Activated CD4-positive, alpha-beta memory T cell treated with anti-CD3 and anti-CD28 coated beads for 36 hours (primary cell): ENCODE measurements at regions of chr3 and their contacts with region 1.

Region 1: GRCh38 chr3:114152519-114153151 is 26.2 kb downstream of the DRD3 start:
- DNase-seq: peak; percentile 90
- H3K4me3 Mint-ChIP-seq: peak overlapping the region; percentile 25
- H3K27ac Mint-ChIP-seq: peak overlapping the region; percentile 18
- H3K4me1 Mint-ChIP-seq: peaks cover 8% of the 10 kb centered on the region
- H3K27me3 Mint-ChIP-seq: no peaks in the 10 kb centered on the region

Region 2: GRCh38 chr3:114168150-114168549 is 15.5 kb after region 1 on chr3:
- CTCF ChIA-PET with region 1: interaction called, 15 read pairs
- POLR2A ChIA-PET with region 1: no interaction called
- intact Hi-C with region 1: no loop called
- DNase-seq: no peak
- H3K4me3 Mint-ChIP-seq: no peak overlapping the region
- H3K27ac Mint-ChIP-seq: no peak overlapping the region
- H3K4me1 Mint-ChIP-seq: no peaks in the 10 kb centered on the region
- H3K27me3 Mint-ChIP-seq: no peaks in the 10 kb centered on the region

Region 3: DNA sequence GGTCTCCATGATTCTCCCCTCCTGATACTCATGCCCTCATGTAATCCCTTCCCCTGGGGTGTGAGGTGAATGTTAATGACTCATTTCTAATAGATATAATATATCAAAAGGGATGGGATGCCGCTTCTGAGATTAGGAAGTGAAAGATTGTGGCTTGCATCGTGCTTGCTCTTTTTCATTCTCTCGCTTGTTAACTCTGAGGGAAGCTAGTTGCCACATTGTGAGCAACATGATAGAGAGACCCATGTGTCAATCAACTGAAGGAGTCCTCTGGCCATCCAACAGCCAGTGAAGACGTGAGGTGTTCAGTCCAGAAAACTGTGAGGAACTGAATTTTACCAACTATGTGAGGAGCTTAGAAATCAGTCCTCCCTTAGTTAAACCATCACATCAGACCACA is 55.1 kb after region 1 on chr3:
- CTCF ChIA-PET with region 1: no interaction called
- POLR2A ChIA-PET with region 1: no interaction called
- intact Hi-C with region 1: no loop called
- DNase-seq: no peak
- H3K4me3 Mint-ChIP-seq: no peak overlapping the region
- H3K27ac Mint-ChIP-seq: no peak overlapping the region
- H3K4me1 Mint-ChIP-seq: peaks cover 17% of the 10 kb centered on the region
- H3K27me3 Mint-ChIP-seq: no peaks in the 10 kb centered on the region

Region 4: DNA sequence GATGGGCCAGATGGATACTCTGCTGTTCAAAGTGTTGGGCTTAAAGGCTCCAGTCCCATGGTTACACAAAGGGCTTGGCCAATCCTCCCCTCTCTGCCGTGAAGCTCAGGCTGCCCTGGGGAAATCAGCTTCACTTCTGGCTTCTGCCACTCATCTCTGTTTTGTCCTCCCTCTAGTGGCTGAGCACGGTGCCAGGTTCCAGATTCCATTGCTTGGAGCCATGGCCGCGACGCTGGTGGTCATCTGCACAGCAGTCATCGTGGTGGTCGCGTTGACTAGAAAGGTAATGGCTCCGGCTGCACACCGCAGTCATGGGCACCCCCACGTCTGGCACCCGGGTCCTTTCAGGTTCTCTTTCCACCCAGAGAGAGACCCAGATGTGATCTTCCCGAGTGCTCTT is 146.8 kb after region 1 on chr3:
- CTCF ChIA-PET with region 1: interaction called, 32 read pairs
- POLR2A ChIA-PET with region 1: no interaction called
- intact Hi-C with region 1: no loop called
- DNase-seq: peak; percentile 60
- H3K4me3 Mint-ChIP-seq: peak overlapping the region; percentile 66
- H3K27ac Mint-ChIP-seq: peak overlapping the region; percentile 84
- H3K4me1 Mint-ChIP-seq: peaks cover 46% of the 10 kb centered on the region
- H3K27me3 Mint-ChIP-seq: no peaks in the 10 kb centered on the region

Region 5: GRCh38 chr3:114323546-114324254 is 171.1 kb after region 1 on chr3:
- CTCF ChIA-PET with region 1: no interaction called
- POLR2A ChIA-PET with region 1: no interaction called
- intact Hi-C with region 1: no loop called
- DNase-seq: no peak
- H3K4me3 Mint-ChIP-seq: peak overlapping the region; percentile 21
- H3K27ac Mint-ChIP-seq: peak overlapping the region; percentile 90
- H3K4me1 Mint-ChIP-seq: peaks cover 85% of the 10 kb centered on the region
- H3K27me3 Mint-ChIP-seq: no peaks in the 10 kb centered on the region

Region 6: DNA sequence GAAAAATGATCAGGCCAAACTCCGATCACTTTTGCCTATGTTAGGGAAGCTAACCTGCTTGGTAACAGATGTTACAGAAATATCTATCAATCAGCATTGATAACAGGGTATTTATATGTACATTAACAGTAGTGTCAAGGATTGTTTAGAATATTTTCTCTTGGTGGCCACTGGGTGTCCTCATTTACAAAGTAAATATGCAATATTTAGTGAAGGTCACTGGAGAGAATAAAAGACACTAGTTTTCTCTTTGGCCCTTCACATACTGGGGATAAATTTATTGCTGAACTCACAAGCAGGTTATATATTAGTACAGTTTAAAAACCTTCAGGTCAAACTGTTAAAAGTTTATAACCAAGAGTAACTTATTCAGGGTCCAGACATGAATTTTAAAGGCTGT is 210.2 kb after region 1 on chr3:
- CTCF ChIA-PET with region 1: interaction called, 3 read pairs
- POLR2A ChIA-PET with region 1: no interaction called
- intact Hi-C with region 1: loop called (anchors 5 kb)
- DNase-seq: no peak
- H3K4me3 Mint-ChIP-seq: no peak overlapping the region
- H3K27ac Mint-ChIP-seq: no peak overlapping the region
- H3K4me1 Mint-ChIP-seq: peaks cover 17% of the 10 kb centered on the region
- H3K27me3 Mint-ChIP-seq: no peaks in the 10 kb centered on the region

Region 7: GRCh38 chr3:114499976-114500375 is 347.3 kb after region 1 on chr3:
- CTCF ChIA-PET with region 1: no interaction called
- POLR2A ChIA-PET with region 1: no interaction called
- intact Hi-C with region 1: loop called (anchors 5 kb)
- DNase-seq: no peak
- H3K4me3 Mint-ChIP-seq: no peak overlapping the region
- H3K27ac Mint-ChIP-seq: no peak overlapping the region
- H3K4me1 Mint-ChIP-seq: peaks cover 26% of the 10 kb centered on the region
- H3K27me3 Mint-ChIP-seq: peaks cover 10% of the 10 kb centered on the region